Testis (tissue), 5 donors: ENCODE measurements at regions of chr6 and their contacts with region 1.

Region 1: DNA sequence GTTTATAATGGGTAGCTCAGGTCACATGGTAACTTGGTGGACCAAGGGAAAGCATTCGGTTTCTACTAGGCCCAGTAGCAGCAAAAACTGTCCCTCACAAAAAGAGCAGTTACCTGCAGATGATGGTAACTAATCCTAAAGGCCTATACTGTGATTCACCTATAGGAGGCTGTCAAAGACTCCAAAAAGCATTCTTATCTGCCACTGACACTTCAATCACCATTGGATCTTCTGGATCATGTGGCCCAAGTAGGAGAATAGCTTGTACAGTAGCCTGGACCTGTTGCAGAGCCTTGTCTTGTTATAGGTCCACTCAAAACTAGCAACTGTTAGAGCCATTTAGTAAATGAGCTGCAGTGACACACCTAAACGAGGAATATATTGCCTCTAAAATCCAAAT is 23.2 kb upstream of the FILIP1 start:
- DNase-seq: no peak
- H3K4me3 ChIP-seq: no peak overlapping the region
- H3K27ac ChIP-seq: no peak overlapping the region
- H3K4me1 ChIP-seq: no peaks in the 10 kb centered on the region
- H3K27me3 ChIP-seq: no peaks in the 10 kb centered on the region
- CTCF ChIP-seq: no peak
- POLR2A ChIP-seq: no peak

Region 2: GRCh38 chr6:74964871-74965441 is 551.8 kb before region 1 on chr6:
- intact Hi-C with region 1: no loop called
- DNase-seq: no peak
- H3K4me3 ChIP-seq: no peak overlapping the region
- H3K27ac ChIP-seq: no peak overlapping the region
- H3K4me1 ChIP-seq: no peaks in the 10 kb centered on the region
- H3K27me3 ChIP-seq: no peaks in the 10 kb centered on the region
- CTCF ChIP-seq: no peak
- POLR2A ChIP-seq: no peak

Region 3: DNA sequence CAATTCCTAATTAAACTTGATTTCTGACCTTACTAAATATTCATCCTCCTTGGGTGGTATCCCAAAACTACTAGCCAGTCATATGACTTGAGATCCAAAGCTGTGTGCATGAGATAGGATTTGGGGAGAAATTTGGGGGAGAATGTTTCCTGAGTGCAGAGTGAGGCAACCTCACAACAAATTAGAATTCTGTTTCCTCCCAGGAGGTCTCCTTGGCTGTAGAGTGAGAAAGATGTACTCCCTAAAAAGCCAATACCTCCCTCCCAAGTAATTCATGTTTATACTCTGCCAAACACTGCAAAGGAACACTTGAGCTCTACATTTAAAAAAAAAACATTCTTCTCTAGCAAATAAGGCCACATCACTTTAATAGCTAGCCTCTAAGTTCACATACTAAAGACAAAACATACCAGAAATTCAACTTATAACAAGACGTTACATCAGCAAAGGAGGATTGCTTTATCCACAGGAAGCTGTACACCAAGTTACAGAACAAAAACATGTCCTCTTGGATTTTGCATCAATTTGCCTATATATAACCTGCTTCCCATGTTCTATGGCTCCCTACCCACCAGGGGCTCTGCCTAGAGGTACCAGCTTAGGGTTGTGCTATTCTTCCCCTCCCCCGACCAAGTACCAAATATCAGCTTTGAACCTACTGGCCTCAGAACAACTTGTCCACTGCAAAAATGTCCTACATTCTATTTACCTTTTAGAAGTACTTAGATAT is 216.8 kb before region 1 on chr6:
- intact Hi-C with region 1: loop called (anchors 10 kb)
- DNase-seq: no peak
- H3K4me3 ChIP-seq: no peak overlapping the region
- H3K27ac ChIP-seq: no peak overlapping the region
- H3K4me1 ChIP-seq: peaks cover 6% of the 10 kb centered on the region
- H3K27me3 ChIP-seq: no peaks in the 10 kb centered on the region
- CTCF ChIP-seq: no peak
- POLR2A ChIP-seq: no peak

Region 4: GRCh38 chr6:75368151-75368779 is 148.5 kb before region 1 on chr6:
- intact Hi-C with region 1: no loop called
- DNase-seq: peak; percentile 35
- H3K4me3 ChIP-seq: no peak overlapping the region
- H3K27ac ChIP-seq: no peak overlapping the region
- H3K4me1 ChIP-seq: no peaks in the 10 kb centered on the region
- H3K27me3 ChIP-seq: no peaks in the 10 kb centered on the region
- CTCF ChIP-seq: peak in 1 of 3 experiments; percentile 6
- POLR2A ChIP-seq: no peak